ENCODE measurements at regions of chr17 and their contacts with region 1.

Region 1: GRCh38 chr17:50769884-50770283 is 2.6 kb upstream of the ANKRD40CL start:
- DNase-seq: no peak
- H3K4me3 ChIP-seq: no peak overlapping the region
- H3K27ac ChIP-seq: no peak overlapping the region
- H3K4me1 ChIP-seq: peaks cover 9% of the 10 kb centered on the region
- H3K27me3 ChIP-seq: no peaks in the 10 kb centered on the region
- CTCF ChIP-seq: no peak

Region 2: DNA sequence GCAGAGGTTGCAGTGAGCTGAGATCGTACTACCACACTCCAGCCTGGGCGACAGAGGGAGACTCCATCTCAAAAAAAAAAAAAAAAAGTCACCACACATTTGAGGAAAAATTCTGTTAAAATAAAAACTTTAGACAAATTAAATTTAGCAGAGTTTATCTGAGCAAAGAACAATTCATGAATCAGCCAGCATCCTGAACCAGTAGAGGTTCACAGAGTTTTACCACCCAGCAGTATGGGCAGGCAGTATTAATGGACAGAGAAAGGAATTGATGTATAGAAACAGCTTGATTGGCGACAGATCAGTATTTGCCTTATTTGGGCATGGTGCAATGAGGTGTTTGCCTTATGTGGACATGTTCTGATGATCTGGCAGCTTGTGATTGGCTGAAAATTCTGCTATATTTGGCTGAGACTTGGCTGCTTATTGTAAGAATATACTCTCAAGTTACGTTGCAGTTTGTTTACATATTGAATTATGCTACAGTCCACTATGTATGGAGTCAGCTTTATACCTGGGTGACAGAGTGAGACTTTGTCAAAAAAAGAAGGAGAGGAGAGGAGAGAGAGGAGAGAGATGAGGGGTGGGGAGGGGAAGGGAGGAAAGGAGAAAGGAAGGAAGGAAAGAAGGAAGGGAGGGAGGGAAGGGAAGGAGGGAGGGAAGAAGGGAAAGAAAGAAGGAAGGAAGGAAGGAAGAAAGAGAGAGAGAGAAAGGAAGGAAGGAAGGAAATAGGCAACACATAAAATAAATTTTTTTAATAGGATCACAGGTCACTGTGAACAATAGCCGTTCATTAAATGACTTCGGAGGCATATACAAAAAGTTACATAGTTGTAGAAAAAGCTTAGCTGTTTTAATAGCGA is 120.6 kb before region 1 on chr17:
- CTCF ChIA-PET with region 1: no interaction called
- POLR2A ChIA-PET with region 1: no interaction called
- intact Hi-C with region 1: no loop called
- DNase-seq: peak; percentile 52
- H3K4me3 ChIP-seq: no peak overlapping the region
- H3K27ac ChIP-seq: peak overlapping the region; percentile 40
- H3K4me1 ChIP-seq: peaks cover 4% of the 10 kb centered on the region
- H3K27me3 ChIP-seq: no peaks in the 10 kb centered on the region
- CTCF ChIP-seq: no peak

Region 3: DNA sequence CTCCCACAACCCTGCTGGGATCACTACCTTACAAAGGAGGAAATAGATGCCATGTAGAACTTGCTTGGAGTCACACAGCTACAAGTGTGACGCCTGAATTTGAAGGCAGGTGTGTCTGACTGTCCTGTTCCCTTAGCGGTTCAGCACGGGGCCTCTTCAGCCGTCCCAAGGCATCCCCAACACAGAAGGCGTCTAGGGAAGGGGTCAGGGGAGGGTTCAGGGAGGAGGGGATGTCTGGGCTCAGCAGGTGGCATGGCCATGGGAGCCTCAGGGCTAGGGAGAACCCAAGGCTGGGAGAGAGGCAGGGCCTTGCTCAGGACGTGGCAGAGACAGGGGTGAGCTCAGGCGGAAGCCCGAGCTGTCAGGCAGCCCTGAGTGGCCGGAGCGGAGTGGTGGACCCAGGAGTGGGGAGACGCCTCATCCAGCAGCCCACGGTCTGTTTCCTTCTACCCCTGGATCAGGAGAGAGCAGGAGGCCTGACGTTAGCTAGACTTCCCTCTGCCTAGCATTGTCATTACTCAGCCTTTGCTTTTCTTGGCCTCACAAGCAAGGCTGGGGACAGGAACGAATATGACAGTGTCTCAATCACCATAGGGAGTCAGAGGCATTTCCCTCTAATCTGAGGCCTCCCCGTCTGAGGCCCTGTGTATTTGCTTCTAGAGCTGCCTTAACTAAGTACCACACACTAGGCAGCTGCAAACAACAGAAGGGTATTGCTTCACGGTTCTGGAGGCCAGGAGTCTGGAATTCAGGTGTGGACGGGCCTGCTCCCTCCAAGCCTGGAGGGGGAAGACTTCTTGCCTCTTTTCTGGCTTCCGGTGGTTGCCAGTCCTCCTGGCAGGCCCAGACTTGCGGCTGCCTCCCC is 28.8 kb after region 1 on chr17:
- CTCF ChIA-PET with region 1: interaction called, 13 read pairs
- POLR2A ChIA-PET with region 1: no interaction called
- intact Hi-C with region 1: no loop called
- DNase-seq: no peak
- H3K4me3 ChIP-seq: no peak overlapping the region
- H3K27ac ChIP-seq: peak overlapping the region; percentile 71
- H3K4me1 ChIP-seq: peaks cover 32% of the 10 kb centered on the region
- H3K27me3 ChIP-seq: no peaks in the 10 kb centered on the region
- CTCF ChIP-seq: no peak

Region 4: DNA sequence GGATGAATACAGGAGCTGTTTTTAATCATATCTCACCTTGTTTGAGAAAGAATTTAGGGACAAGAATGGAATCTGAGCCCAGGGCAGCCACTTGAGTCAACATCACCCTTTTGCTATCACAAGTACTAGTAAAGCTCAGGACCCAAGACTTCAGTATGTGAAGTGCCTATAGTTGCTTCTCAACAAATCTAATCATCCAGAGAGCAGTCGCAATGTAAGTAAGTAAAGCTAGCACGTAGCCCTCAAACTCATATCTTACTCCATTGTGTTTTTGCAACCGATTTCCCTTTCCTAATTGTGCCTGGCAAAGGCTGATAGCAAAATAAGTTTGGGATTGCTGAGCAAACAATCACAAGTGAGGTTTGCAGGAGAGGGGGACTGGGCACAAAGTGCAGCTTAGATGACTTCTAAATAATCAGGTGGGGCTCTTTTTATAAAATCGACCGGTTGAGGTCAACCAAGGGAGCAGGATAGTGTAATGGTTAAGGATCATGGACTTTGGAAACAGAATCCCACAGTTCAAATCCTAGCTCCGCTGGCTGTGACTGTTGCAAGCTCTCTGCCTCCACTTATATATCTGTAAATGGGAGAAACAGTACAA is 83.2 kb after region 1 on chr17:
- CTCF ChIA-PET with region 1: no interaction called
- POLR2A ChIA-PET with region 1: no interaction called
- intact Hi-C with region 1: no loop called
- DNase-seq: no peak
- H3K4me3 ChIP-seq: no peak overlapping the region
- H3K27ac ChIP-seq: no peak overlapping the region
- H3K4me1 ChIP-seq: no peaks in the 10 kb centered on the region
- H3K27me3 ChIP-seq: no peaks in the 10 kb centered on the region
- CTCF ChIP-seq: no peak

Measured in A673 (cell line).